Lower leg skin (tissue), 4 donors: ENCODE measurements at regions of chr21 and their contacts with region 1.

Region 1: DNA sequence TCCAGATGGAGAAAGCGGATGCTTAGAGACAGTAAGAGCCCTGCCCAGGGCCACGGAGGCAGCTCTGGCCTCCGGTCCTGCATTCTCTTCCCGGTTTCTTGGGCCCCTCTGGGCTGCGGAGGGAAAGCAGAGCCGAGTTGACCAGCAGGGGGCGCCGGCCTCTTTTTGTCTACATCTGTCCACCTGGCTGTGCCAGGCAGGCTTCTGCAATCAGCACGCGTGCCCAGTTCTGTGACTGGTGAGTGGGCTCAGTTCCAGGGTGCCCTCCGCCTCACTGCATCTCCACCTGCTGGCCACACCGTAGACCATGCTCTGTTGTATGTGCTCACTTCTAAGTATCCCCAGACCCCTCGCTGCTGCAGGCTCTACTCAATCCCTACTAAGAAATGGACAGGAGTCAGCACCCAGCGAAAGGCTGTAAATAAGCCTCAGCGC is 6.7 kb upstream of the HUNK start:
- DNase-seq: peak; percentile 75 to 96
- H3K4me3 ChIP-seq: no peak overlapping the region
- CTCF ChIP-seq: peak in 1 of 3 donors; percentile 26
- POLR2A ChIP-seq: no peak

Region 2: DNA sequence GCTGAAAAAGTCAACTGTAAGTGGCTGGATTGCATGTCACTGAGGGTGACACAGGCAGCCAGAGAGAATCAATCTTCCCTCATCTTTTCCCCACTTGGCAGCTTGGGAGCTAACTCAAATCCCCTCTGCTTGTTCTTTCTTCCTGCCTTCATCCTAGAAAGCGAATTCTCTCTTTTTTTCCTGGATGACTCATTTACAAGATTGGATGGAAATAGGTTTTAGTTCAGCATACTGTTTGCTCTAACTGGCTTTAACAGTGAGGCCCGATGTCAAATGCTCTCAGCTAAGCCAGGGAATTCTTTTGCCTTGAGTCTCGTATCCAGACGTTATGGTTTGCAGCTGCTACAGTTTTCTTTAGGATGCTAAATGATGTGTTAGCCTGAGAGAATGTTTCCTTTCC is 79.5 kb after region 1 on chr21:
- intact Hi-C with region 1: no loop called
- DNase-seq: no peak
- H3K4me3 ChIP-seq: no peak overlapping the region
- CTCF ChIP-seq: no peak
- POLR2A ChIP-seq: no peak

Region 3: GRCh38 chr21:32257962-32258785 is 392.1 kb after region 1 on chr21:
- intact Hi-C with region 1: loop called (anchors 5 kb)
- DNase-seq: peak; percentile 67 to 89
- H3K4me3 ChIP-seq: no peak overlapping the region
- CTCF ChIP-seq: no peak
- POLR2A ChIP-seq: no peak

Region 4: GRCh38 chr21:32604464-32604863 is 738.4 kb after region 1 on chr21:
- intact Hi-C with region 1: loop called (anchors 10 kb)
- DNase-seq: peak in 1 of 2 donors; percentile 71
- H3K4me3 ChIP-seq: no peak overlapping the region
- CTCF ChIP-seq: no peak
- POLR2A ChIP-seq: no peak